Motor neuron (in vitro differentiated cells): ENCODE measurements at regions of chr6 and their contacts with region 1.

Region 1: GRCh38 chr6:159174263-159174969 is 5.2 kb downstream of the FNDC1 start:
- ATAC-seq: peak; percentile 66 to 88 (median 78)
- H3K4me3 ChIP-seq: no peak overlapping the region
- H3K27ac ChIP-seq: no peak overlapping the region
- H3K4me1 ChIP-seq: peaks cover 2 to 3% of the 10 kb centered on the region in 2 donors

Region 2: GRCh38 chr6:159633196-159633595 is 458.8 kb after region 1 on chr6:
- in situ Hi-C with region 1: loop called in 2 of 9 experiments (anchors 25 kb)
- ATAC-seq: no peak
- H3K4me3 ChIP-seq: no peak overlapping the region
- H3K27ac ChIP-seq: no peak overlapping the region
- H3K4me1 ChIP-seq: no peaks in the 10 kb centered on the region

Region 3: DNA sequence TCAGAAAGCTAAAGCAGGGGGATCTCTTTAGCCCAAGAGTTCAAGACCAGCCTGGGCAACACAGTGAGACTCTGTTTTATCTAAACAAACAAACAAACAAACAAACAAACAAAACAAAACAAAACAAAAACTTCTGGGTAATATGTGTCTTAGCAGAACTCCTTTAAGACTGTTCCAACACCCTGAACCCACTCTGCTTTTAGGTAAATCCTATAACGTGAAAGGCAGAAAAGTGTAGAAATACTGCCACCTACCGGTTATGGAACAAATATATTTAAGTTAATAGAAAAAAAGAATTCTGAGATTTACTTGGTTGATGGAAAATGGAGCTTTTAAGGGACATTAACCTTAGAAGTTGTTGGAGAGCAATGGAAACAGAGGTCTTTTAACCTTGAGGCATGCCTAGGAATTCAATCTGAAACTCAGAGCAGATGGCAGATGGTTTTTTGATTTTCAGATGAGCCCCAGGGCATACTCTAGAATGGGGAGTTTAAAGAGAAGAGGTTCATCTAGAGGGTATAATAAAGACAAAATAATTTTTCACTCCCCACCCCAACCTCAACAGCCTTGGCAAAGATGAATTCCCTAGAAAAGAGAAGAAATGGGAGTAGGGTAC is 480.2 kb after region 1 on chr6:
- in situ Hi-C with region 1: loop called in 5 of 9 experiments (anchors 10 to 25 kb)
- ATAC-seq: peak in 3 of 8 experiments; percentile 48 to 66 (median 58)
- H3K4me3 ChIP-seq: no peak overlapping the region
- H3K27ac ChIP-seq: no peak overlapping the region
- H3K4me1 ChIP-seq: no peaks in the 10 kb centered on the region